GM23248 (cell line): ENCODE measurements at regions of chr5 and their contacts with region 1.

Region 1: GRCh38 chr5:32489791-32490582 is 45.4 kb upstream of the ZFR start:
- DNase-seq: peak; percentile 89
- H3K4me3 ChIP-seq: peak overlapping the region; percentile 5; the same call in 1 of the 2 replicates
- H3K27ac ChIP-seq: no peak overlapping the region
- H3K4me1 ChIP-seq: peaks cover 6% of the 10 kb centered on the region
- H3K27me3 ChIP-seq: no peaks in the 10 kb centered on the region

Region 2: GRCh38 chr5:32585446-32586275 is 95.7 kb after region 1 on chr5 and contains the start of gene SUB1:
- in situ Hi-C with region 1: loop called (anchors 10 kb)
- DNase-seq: peak; percentile 94
- H3K4me3 ChIP-seq: peak within 1 kb of the TSS; percentile 98
- H3K27ac ChIP-seq: peak within 1 kb of the TSS; percentile 86
- H3K4me1 ChIP-seq: peaks cover 31% of the 10 kb centered on the region
- H3K27me3 ChIP-seq: no peaks in the 10 kb centered on the region
- total RNA-seq, gene SUB1: 200 and 350 TPM in 2 replicates